ENCODE measurements at regions of chr6 and their contacts with region 1.

Region 1: DNA sequence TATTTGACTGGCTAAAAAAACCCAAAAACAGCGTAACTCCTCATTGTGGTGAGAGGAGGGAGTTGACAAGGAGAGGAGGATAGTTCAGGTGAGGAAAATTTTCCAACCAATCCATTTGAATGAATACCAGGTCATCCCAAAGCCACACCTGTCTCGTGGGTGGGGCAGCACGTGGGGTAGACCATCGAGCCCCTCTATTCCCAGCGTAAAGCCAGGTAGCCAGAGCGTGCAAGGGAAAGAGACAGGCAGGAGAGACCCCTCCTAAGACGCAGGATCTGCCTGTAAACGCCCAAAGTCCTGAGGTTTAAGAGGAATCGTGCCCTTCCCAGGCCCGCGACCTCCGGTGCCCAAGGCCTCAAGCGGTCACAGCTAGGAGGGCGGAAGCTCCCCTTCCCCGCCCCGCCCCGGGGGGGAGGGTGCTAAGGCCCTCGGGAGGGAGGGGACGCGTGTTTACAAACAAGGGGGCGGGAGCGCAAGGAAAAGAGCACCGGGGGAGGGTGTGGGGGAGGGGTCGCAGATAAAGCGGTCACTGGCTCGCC is 716 bp downstream of the RXRB start:
- DNase-seq: peak; percentile 84
- ATAC-seq: peak; percentile 54

Region 2: DNA sequence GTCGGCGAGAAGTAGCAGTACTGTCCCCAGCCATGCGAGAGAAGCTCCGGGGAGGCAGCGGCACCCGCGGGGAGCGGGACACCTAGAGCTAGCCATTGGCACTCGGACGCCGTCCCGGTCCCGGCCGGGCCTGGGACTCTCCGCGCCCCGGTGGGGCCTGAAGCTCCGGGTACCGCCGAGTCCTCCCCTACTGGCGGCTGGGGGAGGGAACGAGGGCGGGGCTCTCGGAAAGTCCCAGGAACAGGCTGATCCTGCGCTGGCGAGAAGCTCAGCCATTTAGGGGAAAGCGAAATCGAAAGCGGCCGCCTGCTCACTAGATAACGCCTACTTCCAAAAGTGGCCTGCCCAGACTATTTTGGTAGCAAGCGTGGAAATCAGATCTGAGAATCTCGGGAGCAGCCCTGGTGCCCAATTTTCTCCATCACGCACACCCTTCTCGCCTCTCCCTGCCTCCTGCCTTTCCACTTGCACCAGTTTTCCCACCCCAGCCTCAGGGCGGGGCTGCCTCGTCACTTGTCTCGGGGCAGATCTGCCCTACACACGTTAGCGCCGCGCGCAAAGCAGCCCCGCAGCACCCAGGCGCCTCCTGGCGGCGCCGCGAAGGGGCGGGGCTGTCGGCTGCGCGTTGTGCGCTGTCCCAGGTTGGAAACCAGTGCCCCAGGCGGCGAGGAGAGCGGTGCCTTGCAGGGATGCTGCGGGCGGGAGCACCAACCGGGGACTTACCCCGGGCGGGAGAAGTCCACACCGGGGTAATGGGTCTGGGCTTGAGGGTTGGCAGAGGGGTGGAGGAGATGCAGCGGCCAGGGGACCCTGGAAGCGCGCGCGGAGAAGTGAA is 346.0 kb before region 1 on chr6 and contains the starts of genes PSMB9 and TAP1:
- intact Hi-C with region 1: no loop called
- DNase-seq: peak; percentile 97 to 98
- ATAC-seq: peak; percentile 88
- total RNA-seq, gene PSMB9: 26.3 to 72.2 TPM
- total RNA-seq, gene TAP1: 73.5 to 118 TPM

Region 3: GRCh38 chr6:33161354-33162331 is 38.1 kb before region 1 on chr6:
- intact Hi-C with region 1: loop called in 1 of 2 experiments (anchors 5 kb)
- DNase-seq: peak; percentile 68 to 82
- ATAC-seq: peak; percentile 88

Region 4: GRCh38 chr6:33271458-33272274 is 71.9 kb after region 1 on chr6 and contains the starts of genes RPS18 and VPS52:
- intact Hi-C with region 1: no loop called
- DNase-seq: peak; percentile 91 to 96
- ATAC-seq: peak; percentile 84
- total RNA-seq, gene RPS18: 1,882 to 2,045 TPM
- total RNA-seq, gene VPS52: 60.2 to 68.4 TPM